ENCODE measurements at regions of chr16 and their contacts with region 1.

Region 1: GRCh38 chr16:4766874-4767628 is at the start of gene ZNF500:
- DNase-seq: peak; percentile 97
- H3K4me3 ChIP-seq: peak within 1 kb of the TSS; percentile 46 to 98 (median 55)
- H3K27ac ChIP-seq: peak within 1 kb of the TSS; percentile 42
- H3K4me1 ChIP-seq: peaks cover 15% of the 10 kb centered on the region
- H3K27me3 ChIP-seq: no peaks in the 10 kb centered on the region
- CTCF ChIP-seq: no peak
- POLR2A ChIP-seq: peak; percentile 85
- total RNA-seq, gene ZNF500: 12.2 and 13.5 TPM in 2 replicates

Region 2: GRCh38 chr16:4517812-4518680 is 249.0 kb before region 1 on chr16:
- CTCF ChIA-PET with region 1: no interaction called
- POLR2A ChIA-PET with region 1: no interaction called
- dilution Hi-C with region 1: no loop called
- intact Hi-C with region 1: no loop called
- DNase-seq: peak; percentile 66
- H3K4me3 ChIP-seq: no peak overlapping the region
- H3K27ac ChIP-seq: no peak overlapping the region
- H3K4me1 ChIP-seq: peaks cover 22% of the 10 kb centered on the region
- H3K27me3 ChIP-seq: no peaks in the 10 kb centered on the region
- CTCF ChIP-seq: peak; percentile 64 to 76
- POLR2A ChIP-seq: no peak

Region 3: DNA sequence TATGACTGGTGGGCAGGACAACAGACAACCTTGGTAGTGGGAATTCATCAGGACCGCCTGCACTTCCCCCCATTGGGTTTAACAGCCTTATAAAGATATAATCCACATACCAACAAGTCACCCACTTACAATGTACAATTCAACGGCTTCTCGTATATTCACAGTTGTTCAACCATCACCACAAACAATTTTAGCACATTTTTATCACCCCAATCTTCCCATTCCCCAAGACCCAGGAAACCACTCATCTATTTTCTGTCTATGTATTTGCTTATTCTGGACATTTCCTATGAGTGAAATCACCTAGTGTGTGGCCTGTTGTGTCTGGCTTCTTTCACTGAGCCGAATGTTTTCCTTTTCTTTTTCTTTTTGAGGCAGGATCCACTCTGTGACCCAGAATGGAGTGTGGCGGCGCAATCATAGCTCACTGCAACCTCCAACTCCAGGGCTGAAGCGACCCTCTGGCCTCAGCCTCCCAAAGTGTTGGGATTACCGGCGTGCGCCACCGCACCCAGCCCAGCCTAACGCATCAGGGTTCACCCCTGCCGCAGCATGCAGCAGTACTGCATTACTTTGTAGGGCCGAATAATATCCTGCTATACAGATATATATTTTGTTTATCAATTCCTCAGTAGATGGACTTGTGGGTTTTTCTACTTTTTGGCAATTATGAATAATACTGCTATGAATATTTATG is 43.8 kb before region 1 on chr16:
- CTCF ChIA-PET with region 1: no interaction called
- POLR2A ChIA-PET with region 1: no interaction called
- dilution Hi-C with region 1: no loop called
- intact Hi-C with region 1: no loop called
- DNase-seq: no peak
- H3K4me3 ChIP-seq: no peak overlapping the region
- H3K27ac ChIP-seq: no peak overlapping the region
- H3K4me1 ChIP-seq: no peaks in the 10 kb centered on the region
- H3K27me3 ChIP-seq: no peaks in the 10 kb centered on the region
- CTCF ChIP-seq: no peak
- POLR2A ChIP-seq: no peak

Region 4: GRCh38 chr16:4749700-4750257 is 17.3 kb before region 1 on chr16:
- CTCF ChIA-PET with region 1: no interaction called
- POLR2A ChIA-PET with region 1: no interaction called
- dilution Hi-C with region 1: no loop called
- intact Hi-C with region 1: no loop called
- DNase-seq: no peak
- H3K4me3 ChIP-seq: no peak overlapping the region
- H3K27ac ChIP-seq: no peak overlapping the region
- H3K4me1 ChIP-seq: no peaks in the 10 kb centered on the region
- H3K27me3 ChIP-seq: no peaks in the 10 kb centered on the region
- CTCF ChIP-seq: no peak
- POLR2A ChIP-seq: no peak

Region 5: DNA sequence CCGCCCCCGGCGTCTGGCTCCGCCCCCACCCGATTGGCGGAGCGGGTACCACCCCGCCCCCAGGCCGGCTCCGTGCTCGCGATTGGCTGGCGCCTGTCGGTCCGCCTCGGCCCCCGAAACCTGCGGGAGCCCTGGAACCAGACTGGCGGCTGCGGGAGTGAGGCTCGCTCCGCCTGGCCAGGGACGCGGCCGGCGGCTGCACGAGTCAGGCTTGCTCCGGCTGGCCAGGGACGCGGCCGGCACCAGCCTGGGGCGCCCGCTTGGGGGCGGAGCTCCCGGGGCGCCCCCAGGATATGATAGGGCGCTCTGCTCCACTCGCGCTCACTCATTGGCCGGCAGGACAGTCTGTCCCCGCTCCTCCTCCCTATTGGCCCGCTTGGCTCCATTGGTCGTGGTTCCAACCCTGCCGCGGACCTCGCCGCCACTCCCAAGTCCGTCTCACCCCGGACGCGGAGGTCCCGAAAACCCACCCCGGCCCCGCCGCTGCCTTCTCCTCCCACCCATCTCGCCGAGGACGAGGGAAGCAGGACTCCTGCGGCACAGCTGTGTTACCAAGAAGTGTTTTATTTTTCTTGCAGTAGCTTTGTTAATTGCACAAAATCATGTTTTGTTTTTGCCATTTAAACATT is 35.7 kb after region 1 on chr16:
- CTCF ChIA-PET with region 1: interaction called, 3 read pairs
- POLR2A ChIA-PET with region 1: interaction called, 3 read pairs
- dilution Hi-C with region 1: no loop called
- intact Hi-C with region 1: loop called (anchors 1 kb)
- DNase-seq: peak; percentile 91
- H3K4me3 ChIP-seq: peak overlapping the region; percentile 59 to 76 (median 75)
- H3K27ac ChIP-seq: no peak overlapping the region
- H3K4me1 ChIP-seq: peaks cover 7% of the 10 kb centered on the region
- H3K27me3 ChIP-seq: no peaks in the 10 kb centered on the region
- CTCF ChIP-seq: no peak
- POLR2A ChIP-seq: peak; percentile 26

Measured in endothelial cell of umbilical vein (primary cell).